ENCODE measurements at regions of chr15 and their contacts with region 1.

Region 1: DNA sequence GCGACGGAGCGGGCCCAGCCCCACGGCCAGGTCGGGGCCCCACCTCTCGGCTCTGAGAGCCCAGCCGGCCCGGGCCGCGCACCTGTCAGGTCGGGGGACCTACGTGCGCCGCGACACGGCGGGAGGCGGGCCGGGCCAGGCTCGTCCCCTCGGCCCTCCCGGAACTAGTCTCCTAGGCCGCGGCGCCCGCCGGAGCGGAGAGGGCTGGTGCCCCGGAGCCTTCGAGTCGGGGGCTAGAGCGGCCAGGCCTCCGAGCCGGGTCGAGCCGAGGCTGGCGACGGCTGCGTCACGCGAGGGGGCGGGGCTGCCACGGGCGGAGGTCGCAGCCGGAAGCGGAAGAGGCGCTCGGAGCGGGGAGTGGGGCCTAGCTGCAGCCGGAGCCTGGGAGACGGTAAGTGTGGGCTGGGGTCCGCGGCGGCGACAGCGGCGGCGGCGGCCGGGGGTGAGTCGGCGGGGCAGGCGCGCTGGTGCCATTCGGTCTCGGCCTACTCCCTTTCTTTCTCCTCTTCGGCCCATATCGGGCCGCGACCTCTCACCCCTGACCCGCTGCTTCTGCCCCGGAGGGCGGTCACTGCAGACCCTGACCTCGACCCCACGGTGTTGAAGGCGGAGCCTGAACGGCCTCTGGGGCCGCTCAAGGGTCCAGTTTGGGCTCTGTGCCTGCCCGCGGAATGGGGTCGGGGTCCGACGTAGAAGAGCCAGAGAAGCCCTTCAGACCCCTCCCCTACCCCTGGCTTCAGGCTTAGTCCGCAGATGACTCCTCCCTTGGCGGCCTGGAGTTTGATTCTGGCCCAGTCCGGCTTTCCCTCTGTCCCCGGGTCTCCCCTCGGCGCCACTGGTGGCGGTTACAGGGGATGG is at the start of gene CLK3:
- DNase-seq: peak; percentile 97
- H3K4me3 ChIP-seq: peak within 1 kb of the TSS; percentile 99
- H3K27ac ChIP-seq: peak within 1 kb of the TSS; percentile 97
- H3K4me1 ChIP-seq: peaks cover 20% of the 10 kb centered on the region
- H3K27me3 ChIP-seq: no peaks in the 10 kb centered on the region
- CTCF ChIP-seq: no peak
- total RNA-seq, gene CLK3: 83.5 to 88.9 TPM

Region 2: GRCh38 chr15:74460871-74461846 is 154.6 kb before region 1 on chr15 and contains the start of gene UBL7:
- intact Hi-C with region 1: loop called (anchors 10 kb)
- DNase-seq: peak; percentile 99
- H3K4me3 ChIP-seq: peak within 1 kb of the TSS; percentile 60
- H3K27ac ChIP-seq: peak within 1 kb of the TSS; percentile 43
- H3K4me1 ChIP-seq: no peaks in the 10 kb centered on the region
- H3K27me3 ChIP-seq: no peaks in the 10 kb centered on the region
- CTCF ChIP-seq: no peak
- total RNA-seq, gene UBL7: 32.2 to 43.8 TPM

Measured in colonic mucosa (tissue), 4 donors.